Right ventricle myocardium superior (tissue), 1 donor: ENCODE measurements at regions of chr7 and their contacts with region 1.

Region 1: DNA sequence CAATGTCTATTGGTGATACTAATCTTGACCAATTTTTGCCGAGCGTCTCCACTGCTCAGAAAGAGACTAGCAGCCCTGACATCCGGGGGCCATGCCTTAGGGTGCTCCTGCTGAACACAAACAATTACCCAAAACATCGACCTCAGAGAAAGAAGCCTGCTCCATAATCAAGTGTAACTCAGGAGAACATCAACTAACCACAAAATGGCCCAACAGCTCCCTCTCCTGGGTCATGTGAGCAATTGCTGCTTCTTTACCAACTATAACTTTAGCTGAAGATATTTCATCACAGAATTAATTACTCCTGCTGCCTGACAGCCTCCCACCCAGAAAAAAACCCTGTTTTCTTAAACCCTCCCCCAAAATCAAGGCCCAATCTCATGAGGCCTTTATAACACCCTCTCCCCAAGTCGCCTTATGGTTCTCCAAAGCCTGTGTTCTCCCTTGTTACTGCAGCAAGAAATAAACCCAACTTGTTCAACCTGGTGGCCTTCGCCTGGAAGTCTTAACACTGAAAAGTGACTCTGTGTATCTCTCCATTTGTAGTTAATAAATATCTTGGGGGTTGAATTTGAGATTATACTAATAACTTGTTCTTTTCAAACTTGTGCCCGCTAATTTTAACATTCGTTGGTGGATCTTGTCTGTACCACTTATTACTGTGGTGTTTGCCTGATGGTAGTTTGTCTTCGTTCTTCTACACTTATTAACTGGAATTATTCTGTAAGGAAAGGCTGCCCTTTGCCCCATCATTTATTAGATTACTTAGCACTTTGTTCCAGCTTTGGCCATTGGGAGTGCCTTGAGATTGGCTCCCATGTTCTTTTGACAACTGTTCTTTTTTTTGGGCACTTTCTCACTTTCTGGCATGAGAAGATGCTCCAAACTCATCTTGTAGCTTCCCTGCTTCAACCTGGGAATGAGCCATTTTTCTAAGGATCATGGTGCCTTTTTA is 21.2 kb upstream of the RAMP3 start:
- DNase-seq: no peak
- ATAC-seq: peak; percentile 87

Region 2: DNA sequence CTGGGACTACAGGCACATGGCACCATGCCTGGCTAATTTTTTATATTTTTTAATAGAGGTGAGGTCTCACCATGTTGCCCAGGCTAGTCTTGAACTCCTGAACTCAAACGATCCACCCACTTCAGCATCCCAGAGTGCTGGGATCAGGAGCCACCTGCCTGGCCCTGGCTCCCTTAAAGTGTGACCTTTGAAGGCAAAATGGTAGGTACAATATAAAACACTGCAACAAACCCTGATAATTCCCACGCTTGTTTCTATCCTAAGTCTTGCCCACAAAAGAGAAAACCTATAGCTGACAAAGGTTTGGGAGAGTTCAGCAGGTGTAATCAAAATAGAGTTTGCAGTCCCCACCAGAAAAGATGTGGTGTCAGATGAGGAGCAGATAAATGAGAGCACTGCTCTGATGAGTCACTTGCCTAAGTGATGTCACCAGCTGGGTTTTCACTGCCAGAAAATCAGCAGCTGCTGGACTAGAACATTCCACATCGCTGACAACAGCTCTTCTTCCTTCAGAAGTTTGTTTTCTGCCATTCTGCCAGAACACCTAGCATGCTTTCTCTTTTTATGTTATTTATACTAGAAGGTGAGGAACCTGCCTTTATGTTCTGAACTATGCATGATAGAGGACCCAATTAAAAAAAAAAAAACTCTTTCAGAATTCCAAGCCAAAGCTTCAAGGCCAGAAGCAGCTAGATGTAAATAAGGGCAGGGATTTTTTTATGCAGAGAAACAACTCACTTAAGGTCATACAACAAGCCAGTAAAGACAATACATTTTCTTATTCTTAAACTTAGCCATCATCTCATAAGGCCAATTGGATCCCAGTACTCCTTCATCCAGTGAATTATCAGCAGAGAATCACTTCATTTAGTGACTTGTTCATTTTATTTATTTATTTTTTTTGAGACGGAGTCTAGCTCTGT is 269.0 kb before region 1 on chr7:
- intact Hi-C with region 1: loop called (anchors 10 kb)
- DNase-seq: no peak
- ATAC-seq: peak; percentile 45

Region 3: GRCh38 chr7:44973610-44974401 is 162.6 kb before region 1 on chr7:
- intact Hi-C with region 1: loop called (anchors 5 kb)
- DNase-seq: peak; percentile 70
- ATAC-seq: peak; percentile 79